Kidney (tissue), 22 donors: ENCODE measurements at regions of chr2 and their contacts with region 1.

Region 1: DNA sequence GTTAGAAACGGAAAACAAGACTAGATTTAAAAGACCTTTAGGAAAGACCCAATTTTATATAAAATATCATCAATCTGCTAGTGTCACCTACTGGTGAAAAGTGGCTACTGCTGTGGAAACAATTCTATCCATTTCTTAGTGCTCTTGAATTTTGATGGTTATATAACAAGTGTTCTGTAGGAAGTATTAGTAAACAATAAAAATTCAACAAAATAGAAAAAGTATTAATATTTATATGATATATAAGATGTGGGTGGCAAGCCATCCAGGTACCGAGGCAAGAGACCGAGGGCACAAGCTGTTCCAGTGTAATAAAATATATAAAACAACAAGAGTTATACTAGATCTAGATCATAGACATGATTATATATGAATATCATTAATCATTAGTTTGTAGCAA is 6.2 kb upstream of the TMEM87B start:
- DNase-seq: peak in 3 of 5 donors; percentile 44 to 83 (median 78)
- H3K4me3 ChIP-seq: no peak overlapping the region
- H3K27ac ChIP-seq: no peak overlapping the region
- H3K4me1 ChIP-seq: peaks cover 0 to 5% (median 3%) of the 10 kb centered on the region in 3 donors
- H3K27me3 ChIP-seq: no peaks in the 10 kb centered on the region
- CTCF ChIP-seq: peak; percentile 95

Region 2: GRCh38 chr2:111897924-111898702 is 150.8 kb before region 1 on chr2 and contains the start of gene MERTK:
- intact Hi-C with region 1: loop called (anchors 5 kb)
- DNase-seq: peak; percentile 97 to 98 (median 97)
- H3K4me3 ChIP-seq: peak within 1 kb of the TSS; percentile 75 to 91 (median 84)
- H3K27ac ChIP-seq: peak within 1 kb of the TSS; percentile 82 to 88
- H3K4me1 ChIP-seq: peaks cover 3 to 21% (median 16%) of the 10 kb centered on the region in 3 donors
- H3K27me3 ChIP-seq: no peaks in the 10 kb centered on the region
- CTCF ChIP-seq: peak; percentile 78
- total RNA-seq, gene MERTK: 32.2 TPM